ENCODE measurements at regions of chr21 and their contacts with region 1.

Region 1: GRCh38 chr21:15195768-15196167 is 131.0 kb upstream of the NRIP1 start:
- DNase-seq: no peak
- H3K4me3 Mint-ChIP-seq: no peak overlapping the region
- H3K27ac Mint-ChIP-seq: no peak overlapping the region
- H3K4me1 Mint-ChIP-seq: no peaks in the 10 kb centered on the region
- H3K27me3 Mint-ChIP-seq: peaks cover 2% of the 10 kb centered on the region

Region 2: DNA sequence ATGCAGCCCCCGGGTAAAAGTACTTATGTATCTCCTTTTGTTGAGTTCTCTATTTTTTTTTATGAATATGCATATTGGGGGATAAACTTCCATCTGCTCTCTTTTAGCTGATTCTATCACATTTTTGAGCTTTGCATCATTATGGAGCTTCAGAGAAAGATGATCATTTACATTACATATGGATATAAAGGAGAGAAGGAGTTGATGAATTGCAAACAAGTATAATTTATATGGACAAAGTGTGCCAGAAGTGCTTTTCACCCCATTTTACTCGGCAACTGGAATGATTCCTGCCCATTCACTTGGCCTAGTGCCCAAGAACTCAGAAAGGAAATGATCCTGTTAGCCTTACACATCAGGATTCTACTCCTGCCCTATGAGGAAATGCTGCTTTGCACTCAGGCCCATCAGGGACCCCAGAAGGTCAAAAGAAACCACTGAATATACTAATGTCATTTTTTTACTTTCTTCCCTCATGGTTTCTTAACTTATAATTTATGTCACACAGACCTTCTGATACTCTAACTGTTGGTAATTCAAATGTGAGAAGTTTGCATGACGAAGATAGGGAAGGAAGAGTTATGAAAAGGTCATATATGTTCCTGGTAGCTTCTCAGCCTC is 715.2 kb before region 1 on chr21:
- intact Hi-C with region 1: no loop called
- DNase-seq: no peak
- H3K4me3 Mint-ChIP-seq: no peak overlapping the region
- H3K27ac Mint-ChIP-seq: peak overlapping the region; percentile 69
- H3K4me1 Mint-ChIP-seq: peaks cover 68% of the 10 kb centered on the region
- H3K27me3 Mint-ChIP-seq: no peaks in the 10 kb centered on the region

Region 3: DNA sequence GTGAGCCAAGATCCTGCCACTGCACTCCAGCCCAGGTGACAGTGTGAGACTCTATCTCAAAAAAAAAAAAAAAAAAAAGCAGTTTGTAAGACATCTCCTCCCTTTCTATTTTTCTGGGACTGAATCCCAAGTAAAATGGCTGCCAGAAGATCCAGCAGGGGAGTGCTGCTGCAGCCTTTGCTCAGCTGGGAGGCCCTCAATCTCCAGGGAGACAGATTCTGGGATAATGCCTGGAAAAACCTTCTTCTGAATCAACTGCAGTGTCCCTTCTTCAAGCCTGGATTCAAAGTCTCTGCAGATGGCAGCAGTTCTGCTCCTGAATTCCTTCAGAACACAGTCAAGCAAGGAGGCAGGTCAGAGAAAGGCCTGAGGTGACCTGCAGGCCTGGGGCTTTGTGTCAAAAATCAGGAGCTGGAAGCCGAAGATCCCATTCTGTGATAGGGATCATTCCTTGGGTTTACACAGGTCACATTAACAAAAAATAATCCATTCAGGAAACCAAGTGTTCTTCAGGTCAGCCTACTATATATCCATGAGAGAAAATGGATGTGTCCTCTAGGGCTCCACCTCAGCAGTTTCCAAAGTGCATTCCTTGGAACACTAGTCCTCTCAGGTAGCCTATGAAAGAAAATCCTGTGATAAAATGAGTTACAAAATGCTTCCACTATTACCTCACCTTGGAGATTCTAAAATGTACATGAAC is 60.1 kb after region 1 on chr21:
- intact Hi-C with region 1: loop called (anchors 2 kb)
- DNase-seq: no peak
- H3K4me3 Mint-ChIP-seq: no peak overlapping the region
- H3K27ac Mint-ChIP-seq: no peak overlapping the region
- H3K4me1 Mint-ChIP-seq: no peaks in the 10 kb centered on the region
- H3K27me3 Mint-ChIP-seq: peaks cover 2% of the 10 kb centered on the region

Measured in activated T-helper 1 cell treated with anti-CD3 and anti-CD28 coated beads, Interleukin-12 subunit alpha, Interleukin-12 subunit beta, Interleukin-2, Interleukin-4 antibody, amounts not matched to agents 30 ng/mL and 10 ng/mL and 1 ng/mL, durations not matched to agents 14 hours and 24 hours and 36 hours (primary cell).